ENCODE measurements at regions of chr4 and their contacts with region 1.

Region 1: DNA sequence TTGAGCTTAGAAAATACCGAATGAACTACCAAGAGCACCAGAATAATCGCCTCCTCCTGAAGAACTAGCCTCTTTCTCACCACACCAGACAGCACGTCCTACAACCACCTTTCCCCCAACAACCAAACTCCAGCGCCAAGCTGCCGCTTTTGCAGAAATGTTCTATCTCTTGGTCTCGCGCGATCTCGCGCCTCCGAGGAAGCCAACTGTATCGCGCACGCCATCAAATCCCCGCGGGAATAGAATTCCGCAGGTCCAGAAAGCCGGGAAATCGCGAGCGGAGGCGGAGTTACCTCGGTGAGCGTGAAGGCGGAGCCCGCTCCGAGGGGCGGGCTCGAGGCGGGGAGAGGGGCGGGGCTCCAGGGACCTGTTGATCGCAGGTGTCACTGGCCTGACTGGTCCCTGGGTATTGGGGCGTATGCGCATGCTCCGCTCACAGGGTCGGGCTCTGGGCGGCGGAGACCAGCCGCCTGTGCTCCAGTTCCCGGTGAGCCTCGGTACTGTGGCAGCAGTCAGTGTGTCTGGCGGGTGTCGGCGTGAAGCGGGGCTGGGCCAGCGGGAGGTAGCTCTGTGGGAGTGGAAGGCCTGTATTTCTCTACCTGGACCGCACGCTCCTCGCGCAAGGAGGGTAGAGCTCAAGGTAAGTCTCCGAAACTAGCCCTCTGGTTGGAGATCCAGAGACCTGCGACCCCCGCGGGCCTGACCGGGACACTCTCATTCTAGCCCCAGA is at the start of gene USP53:
- DNase-seq: peak; percentile 99
- H3K4me3 Mint-ChIP-seq: peak within 1 kb of the TSS; percentile 88
- H3K27ac Mint-ChIP-seq: peak within 1 kb of the TSS; percentile 96
- H3K4me1 Mint-ChIP-seq: peaks cover 39% of the 10 kb centered on the region
- H3K27me3 Mint-ChIP-seq: no peaks in the 10 kb centered on the region
- total RNA-seq, gene USP53: 9.5 to 10.5 TPM

Region 2: DNA sequence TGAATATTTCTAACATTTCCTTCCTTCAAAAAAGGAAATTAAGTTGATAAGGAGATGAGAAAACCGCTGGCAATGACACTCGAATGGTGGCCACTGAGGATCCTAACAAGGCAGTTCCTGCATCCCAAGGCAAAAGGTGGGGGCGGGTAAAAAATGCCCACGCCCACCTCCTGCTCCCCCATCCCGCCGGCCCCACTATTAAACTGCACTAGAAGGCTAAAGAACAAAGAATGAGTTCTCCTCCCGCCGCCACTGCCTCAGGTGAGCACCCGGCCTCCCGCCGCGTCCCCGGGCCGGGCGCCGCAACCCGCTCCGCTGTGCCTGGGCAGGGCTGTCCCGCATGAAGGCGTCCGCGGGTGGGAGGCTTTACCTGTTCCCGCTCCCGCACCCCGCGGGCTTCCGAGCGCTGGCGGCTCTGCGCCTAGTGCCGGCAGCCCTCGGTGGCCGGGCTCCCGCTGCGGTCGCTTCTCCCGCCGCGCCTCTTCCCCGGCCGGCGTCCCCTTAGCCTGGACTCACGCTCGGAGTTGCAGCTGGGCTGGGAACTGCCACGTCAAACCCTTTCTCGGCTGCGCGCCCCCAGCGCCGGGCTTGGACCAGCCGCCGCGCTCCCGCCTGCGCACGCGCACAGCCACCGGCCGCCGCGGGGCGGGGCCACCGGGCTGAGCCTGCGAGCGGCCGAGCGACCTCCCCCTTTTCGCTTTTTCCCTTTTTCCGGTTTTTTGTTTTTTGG is 376.7 kb before region 1 on chr4 and contains the start of gene SEC24D:
- CTCF ChIA-PET with region 1: no interaction called
- POLR2A ChIA-PET with region 1: no interaction called
- intact Hi-C with region 1: loop called (anchors 5 kb)
- DNase-seq: peak; percentile 89
- H3K4me3 Mint-ChIP-seq: peak within 1 kb of the TSS; percentile 88
- H3K27ac Mint-ChIP-seq: peak within 1 kb of the TSS; percentile 91
- H3K4me1 Mint-ChIP-seq: peaks cover 23% of the 10 kb centered on the region
- H3K27me3 Mint-ChIP-seq: no peaks in the 10 kb centered on the region
- total RNA-seq, gene SEC24D: 36.2 to 41.0 TPM

Region 3: DNA sequence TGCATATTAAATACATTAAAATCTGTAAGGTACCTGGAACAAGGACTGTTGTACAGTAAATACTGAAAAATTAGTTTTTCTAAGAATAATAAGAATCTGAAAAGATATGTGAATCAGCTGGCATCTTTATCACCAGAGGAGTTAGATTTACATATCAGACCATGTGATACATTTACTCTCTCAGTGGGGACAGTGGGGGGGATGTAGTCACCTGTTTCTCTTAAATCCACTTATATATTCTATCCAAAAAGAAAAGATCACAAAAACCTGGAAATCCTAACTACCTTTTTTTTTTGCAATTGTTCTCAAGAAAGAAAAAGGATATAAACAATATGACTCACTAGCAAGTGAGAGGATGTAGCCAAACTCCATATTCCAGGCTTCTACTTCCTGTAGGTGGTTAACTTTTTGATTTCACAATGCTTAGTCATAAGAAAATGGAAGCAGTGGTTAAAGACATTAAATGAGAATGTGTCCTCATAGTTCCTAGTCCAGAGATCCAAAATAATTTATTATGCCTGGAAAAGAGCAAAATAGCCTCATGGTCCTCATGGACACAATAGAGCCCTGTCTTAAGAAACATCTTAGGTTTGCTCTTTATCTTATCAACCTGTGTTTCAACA is 99.3 kb before region 1 on chr4:
- CTCF ChIA-PET with region 1: no interaction called
- POLR2A ChIA-PET with region 1: no interaction called
- intact Hi-C with region 1: loop called (anchors 1 kb)
- DNase-seq: no peak
- H3K4me3 Mint-ChIP-seq: no peak overlapping the region
- H3K27ac Mint-ChIP-seq: no peak overlapping the region
- H3K4me1 Mint-ChIP-seq: peaks cover 4% of the 10 kb centered on the region
- H3K27me3 Mint-ChIP-seq: no peaks in the 10 kb centered on the region

Region 4: GRCh38 chr4:119264743-119265142 is 52.3 kb after region 1 on chr4:
- CTCF ChIA-PET with region 1: no interaction called
- POLR2A ChIA-PET with region 1: no interaction called
- intact Hi-C with region 1: loop called (anchors 1 kb)
- DNase-seq: no peak
- H3K4me3 Mint-ChIP-seq: no peak overlapping the region
- H3K27ac Mint-ChIP-seq: peak overlapping the region; percentile 47
- H3K4me1 Mint-ChIP-seq: peaks cover 12% of the 10 kb centered on the region
- H3K27me3 Mint-ChIP-seq: no peaks in the 10 kb centered on the region

Region 5: GRCh38 chr4:119300101-119300978 is 87.9 kb after region 1 on chr4:
- CTCF ChIA-PET with region 1: no interaction called
- POLR2A ChIA-PET with region 1: interaction called, 23 read pairs
- intact Hi-C with region 1: loop called (anchors 1 kb)
- DNase-seq: peak; percentile 95
- H3K4me3 Mint-ChIP-seq: peak overlapping the region; percentile 96
- H3K27ac Mint-ChIP-seq: peak overlapping the region; percentile 97
- H3K4me1 Mint-ChIP-seq: peaks cover 30% of the 10 kb centered on the region
- H3K27me3 Mint-ChIP-seq: no peaks in the 10 kb centered on the region

Region 6: GRCh38 chr4:119329835-119330620 is 117.6 kb after region 1 on chr4:
- CTCF ChIA-PET with region 1: no interaction called
- POLR2A ChIA-PET with region 1: no interaction called
- intact Hi-C with region 1: no loop called
- DNase-seq: no peak
- H3K4me3 Mint-ChIP-seq: no peak overlapping the region
- H3K27ac Mint-ChIP-seq: no peak overlapping the region
- H3K4me1 Mint-ChIP-seq: no peaks in the 10 kb centered on the region
- H3K27me3 Mint-ChIP-seq: peaks cover 9% of the 10 kb centered on the region

Region 7: DNA sequence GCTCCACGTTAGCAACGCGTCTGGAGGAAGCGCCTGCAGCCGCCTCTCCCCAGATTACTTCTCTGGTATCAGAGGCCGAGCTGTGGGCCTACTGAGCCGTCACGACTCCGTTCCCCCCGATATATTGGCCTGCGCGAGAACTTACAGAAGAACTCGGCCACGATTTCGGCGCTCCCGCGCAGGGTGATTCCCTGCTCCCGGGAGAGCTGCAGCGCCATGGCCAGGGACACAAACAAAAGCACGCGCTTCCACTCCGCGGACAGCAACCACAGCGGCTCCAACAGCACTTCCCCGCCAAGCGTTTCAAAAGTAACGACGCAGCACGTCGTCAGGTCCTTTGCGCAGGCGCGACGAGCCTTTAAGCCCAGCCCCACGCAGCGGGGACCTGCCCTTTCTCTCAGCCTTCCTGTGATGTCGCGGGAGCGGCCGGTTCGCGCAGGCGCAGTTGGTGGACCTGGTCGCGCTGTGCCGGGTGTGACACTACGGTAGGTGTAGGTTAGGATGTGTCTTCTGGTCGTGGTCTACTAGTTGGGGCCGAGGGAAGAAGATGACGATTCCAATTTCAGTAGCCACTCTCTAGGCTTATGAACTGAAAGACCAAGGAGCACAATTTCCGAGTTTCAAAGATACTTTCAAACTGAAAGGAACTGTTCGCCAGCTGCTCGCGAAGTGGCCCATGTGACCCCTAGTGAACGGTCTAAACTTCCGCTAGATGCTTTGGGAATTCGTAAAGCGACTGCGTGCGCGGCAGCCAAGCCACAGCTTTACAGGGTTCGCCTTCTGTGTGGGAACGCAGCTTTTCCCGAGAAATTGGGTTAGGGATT is 854.3 kb after region 1 on chr4 and contains the start of gene MAD2L1:
- CTCF ChIA-PET with region 1: no interaction called
- POLR2A ChIA-PET with region 1: no interaction called
- intact Hi-C with region 1: loop called (anchors 1 kb)
- DNase-seq: peak; percentile 99
- H3K4me3 Mint-ChIP-seq: peak within 1 kb of the TSS; percentile 98
- H3K27ac Mint-ChIP-seq: peak within 1 kb of the TSS; percentile 99
- H3K4me1 Mint-ChIP-seq: peaks cover 58% of the 10 kb centered on the region
- H3K27me3 Mint-ChIP-seq: no peaks in the 10 kb centered on the region
- total RNA-seq, gene MAD2L1: 92.0 to 96.6 TPM